Heart left ventricle (tissue), 16 donors: ENCODE measurements at regions of chr12 and their contacts with region 1.

Region 1: DNA sequence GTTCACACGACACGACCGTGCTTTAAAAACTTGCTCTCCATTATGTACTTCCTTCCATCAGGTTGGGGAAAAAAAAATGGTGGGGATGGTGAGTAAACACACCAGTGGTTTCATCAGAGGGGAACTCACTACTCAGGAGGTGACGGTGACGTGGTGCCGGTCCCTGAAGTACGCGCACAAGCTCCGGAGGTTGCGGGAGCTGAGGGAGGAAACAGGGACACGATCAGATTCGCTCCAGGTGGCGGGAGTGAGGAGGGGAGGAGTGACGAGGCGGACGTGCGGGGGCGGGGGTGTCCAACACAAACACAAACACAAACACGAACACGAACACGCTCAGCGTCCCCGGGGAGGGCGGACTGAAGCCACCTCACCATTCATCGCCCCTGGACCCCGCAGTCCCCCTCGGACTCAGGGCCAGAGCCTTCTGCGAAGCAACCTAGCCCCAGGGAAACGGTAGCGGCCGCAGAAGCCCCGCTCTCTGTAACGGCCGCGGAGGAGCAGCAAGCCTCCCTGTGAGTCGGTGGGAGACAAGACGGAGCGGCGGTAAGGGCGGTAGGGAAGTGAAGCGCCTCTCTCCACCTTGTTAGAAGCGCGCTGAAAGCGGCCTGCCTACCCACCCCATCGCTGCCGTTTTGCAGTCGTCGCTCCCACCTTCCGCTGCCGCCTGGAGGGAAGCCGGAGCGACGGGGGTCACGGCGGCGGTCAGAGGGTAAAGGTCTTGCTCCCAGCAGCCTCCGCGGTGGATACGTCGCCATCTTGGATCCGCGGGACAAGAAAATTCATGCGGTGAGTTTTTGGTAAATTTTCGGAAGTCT is at the start of gene CNOT2:
- DNase-seq: peak; percentile 91 to 95 (median 92)
- ATAC-seq: peak; percentile 96 to 98 (median 98)
- H3K4me3 ChIP-seq: peak within 1 kb of the TSS; percentile 78 to 97 (median 89)
- H3K27ac ChIP-seq: peak within 1 kb of the TSS; percentile 85 to 99 (median 96)
- H3K4me1 ChIP-seq: peaks cover 0 to 62% (median 42%) of the 10 kb centered on the region in 12 donors
- H3K27me3 ChIP-seq: no peaks in the 10 kb centered on the region
- CTCF ChIP-seq: peak in 1 of 12 donors; percentile 15
- POLR2A ChIP-seq: peak in 1 of 2 donors; percentile 37
- total RNA-seq, gene CNOT2: 32.7 to 63.7 (median 37.0) TPM

Region 2: DNA sequence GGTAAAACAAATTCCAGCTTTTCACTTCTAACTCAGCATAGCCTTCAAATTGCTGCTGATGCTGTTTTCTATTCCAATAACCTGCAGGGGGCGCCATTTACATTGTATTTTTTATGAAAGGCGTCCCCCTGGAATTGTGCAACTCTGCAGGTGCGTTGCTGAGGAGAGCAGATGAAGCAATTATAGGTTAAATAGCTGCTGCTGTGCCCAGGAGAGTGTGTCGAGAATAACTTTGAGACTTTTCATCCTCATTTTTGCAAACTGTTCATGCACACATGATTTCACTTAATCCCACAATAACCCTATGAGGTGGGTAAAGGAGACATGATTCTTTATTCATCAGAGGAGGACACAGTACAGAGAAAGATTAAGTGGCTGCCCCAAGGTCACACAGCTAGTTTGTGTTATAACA is 342.2 kb before region 1 on chr12:
- intact Hi-C with region 1: loop called in 4 of 10 experiments (anchors 5 to 10 kb)
- DNase-seq: peak in 4 of 5 donors; percentile 61 to 81 (median 68)
- ATAC-seq: peak in 3 of 4 donors; percentile 49 to 65 (median 58)
- H3K4me3 ChIP-seq: no peak overlapping the region
- H3K27ac ChIP-seq: peak overlapping the region in 2 of 12 donors; percentile 2 to 25
- H3K4me1 ChIP-seq: peaks cover 0 to 32% (median 9%) of the 10 kb centered on the region in 12 donors
- H3K27me3 ChIP-seq: no peaks in the 10 kb centered on the region
- CTCF ChIP-seq: peak; percentile 78 to 93 (median 86)
- POLR2A ChIP-seq: no peak

Region 3: GRCh38 chr12:70338526-70338925 is 95.6 kb after region 1 on chr12:
- intact Hi-C with region 1: loop called in 1 of 10 experiments (anchors 10 kb)
- DNase-seq: no peak
- ATAC-seq: no peak
- H3K4me3 ChIP-seq: no peak overlapping the region
- H3K27ac ChIP-seq: no peak overlapping the region
- H3K4me1 ChIP-seq: peaks cover 0 to under 1% (median 0%) of the 10 kb centered on the region in 12 donors
- H3K27me3 ChIP-seq: no peaks in the 10 kb centered on the region
- CTCF ChIP-seq: no peak
- POLR2A ChIP-seq: no peak

Region 4: GRCh38 chr12:70365648-70366518 is 123.0 kb after region 1 on chr12 and contains the start of gene KCNMB4:
- intact Hi-C with region 1: loop called in 6 of 10 experiments (anchors 5 to 10 kb)
- DNase-seq: peak; percentile 66 to 79 (median 70)
- ATAC-seq: peak; percentile 57 to 96 (median 86)
- H3K4me3 ChIP-seq: peak within 1 kb of the TSS; percentile 39 to 87 (median 74)
- H3K27ac ChIP-seq: peak within 1 kb of the TSS in 9 of 12 donors; percentile 8 to 58 (median 48)
- H3K4me1 ChIP-seq: peaks cover 0 to 30% (median 10%) of the 10 kb centered on the region in 12 donors
- H3K27me3 ChIP-seq: peaks cover 0 to 21% (median 0%) of the 10 kb centered on the region in 9 donors
- CTCF ChIP-seq: no peak
- POLR2A ChIP-seq: no peak
- total RNA-seq, gene KCNMB4: 0.96 to 3.6 (median 2.1) TPM

Region 5: DNA sequence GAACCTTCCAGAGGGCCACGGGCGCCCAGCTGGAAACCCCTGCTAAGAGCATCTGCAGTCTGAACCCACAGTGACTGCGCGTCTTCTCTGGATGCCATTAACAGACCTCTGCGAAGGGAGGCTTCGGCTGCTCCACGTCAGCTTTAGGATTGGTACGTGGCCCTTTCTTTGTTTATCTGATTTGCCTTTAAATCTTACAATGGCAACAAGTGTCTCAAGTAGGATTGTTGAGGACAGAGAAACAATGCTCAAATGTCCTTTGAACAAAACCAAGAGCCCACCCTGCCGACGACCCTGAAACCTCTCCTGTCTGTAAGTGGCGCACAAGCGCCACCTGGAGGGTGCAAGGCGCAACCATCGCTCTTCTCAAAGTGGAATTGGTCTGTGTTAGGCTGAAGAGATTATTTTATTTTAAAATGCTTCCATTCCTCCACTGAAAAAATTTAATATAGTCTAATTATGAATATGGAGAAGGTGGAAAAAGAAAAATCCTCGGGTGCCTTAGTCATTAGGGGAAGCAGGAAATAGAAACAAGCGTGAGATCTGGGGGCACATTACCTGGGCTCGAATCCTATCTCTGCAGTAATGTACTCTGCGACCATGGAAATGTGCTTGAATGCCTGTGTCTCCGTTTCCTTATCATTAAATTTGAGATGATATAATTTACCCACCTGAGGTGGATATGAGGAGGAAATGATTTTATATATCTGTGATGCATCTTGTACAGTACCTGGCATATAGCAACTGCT is 476.9 kb after region 1 on chr12:
- intact Hi-C with region 1: loop called in 2 of 10 experiments (anchors 5 to 10 kb)
- DNase-seq: peak; percentile 33 to 65 (median 41)
- ATAC-seq: peak in 3 of 4 donors; percentile 68 to 78 (median 74)
- H3K4me3 ChIP-seq: peak overlapping the region in 10 of 12 donors; percentile 2 to 52 (median 38)
- H3K27ac ChIP-seq: peak overlapping the region; percentile 6 to 74 (median 48)
- H3K4me1 ChIP-seq: peaks cover 0 to 41% (median 7%) of the 10 kb centered on the region in 12 donors
- H3K27me3 ChIP-seq: peaks cover 0 to 8% (median 0%) of the 10 kb centered on the region in 9 donors
- CTCF ChIP-seq: peak; percentile 80 to 97 (median 92)
- POLR2A ChIP-seq: no peak